Activated CD4-positive, alpha-beta memory T cell treated with anti-CD3 and anti-CD28 coated beads, Interleukin-2, amount 10 ng/mL, durations not matched to agents 7 days and 5 days (primary cell): ENCODE measurements at regions of chr19 and their contacts with region 1.

Region 1: DNA sequence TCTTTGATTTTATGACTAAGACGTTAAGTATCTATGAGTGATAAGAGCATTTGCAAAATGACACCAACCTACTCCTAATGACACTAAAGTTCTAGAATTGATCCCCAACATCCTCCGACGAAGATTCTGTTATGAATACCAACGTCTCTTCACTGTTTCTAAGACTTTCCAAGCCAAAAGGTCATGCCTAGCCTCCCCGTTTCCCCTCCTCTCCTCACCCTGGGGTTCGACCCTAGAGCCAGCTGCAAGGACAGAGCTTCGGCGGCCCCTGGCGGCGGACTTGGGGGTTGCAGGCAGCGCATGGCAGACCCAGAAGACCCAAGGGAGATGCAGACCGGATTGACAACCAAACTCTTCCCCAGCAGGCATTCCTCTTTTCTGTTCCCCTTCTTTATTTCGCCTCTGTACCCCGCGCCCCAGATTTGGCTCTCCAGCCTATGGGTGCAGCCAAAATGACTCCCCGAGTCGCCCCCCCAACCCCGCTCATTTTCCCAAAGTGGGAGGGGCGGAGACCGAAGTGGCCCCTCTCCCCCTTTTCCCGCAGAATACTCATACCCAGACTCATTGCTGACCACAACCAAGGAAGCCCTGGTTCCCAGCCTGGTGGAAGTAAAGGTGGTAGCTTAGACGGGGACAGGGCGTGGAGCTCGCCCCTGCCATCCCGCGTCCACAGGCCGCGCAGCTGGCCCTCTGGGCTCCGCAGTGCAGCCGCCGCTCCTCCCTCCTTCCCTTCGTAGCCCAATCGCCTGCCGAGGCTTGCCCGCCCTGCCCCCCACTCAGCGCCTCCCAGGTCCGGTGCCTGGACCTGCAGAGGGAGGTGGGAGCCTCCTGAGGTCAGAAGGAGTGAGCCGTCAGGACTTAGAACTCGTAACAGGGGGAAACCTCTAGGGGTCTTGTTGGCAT is 4.1 kb upstream of the EML2 start:
- DNase-seq: peak; percentile 90
- H3K4me3 Mint-ChIP-seq: peak overlapping the region; percentile 64
- H3K27ac Mint-ChIP-seq: peak overlapping the region; percentile 100
- H3K4me1 Mint-ChIP-seq: peaks cover 62% of the 10 kb centered on the region
- H3K27me3 Mint-ChIP-seq: no peaks in the 10 kb centered on the region

Region 2: DNA sequence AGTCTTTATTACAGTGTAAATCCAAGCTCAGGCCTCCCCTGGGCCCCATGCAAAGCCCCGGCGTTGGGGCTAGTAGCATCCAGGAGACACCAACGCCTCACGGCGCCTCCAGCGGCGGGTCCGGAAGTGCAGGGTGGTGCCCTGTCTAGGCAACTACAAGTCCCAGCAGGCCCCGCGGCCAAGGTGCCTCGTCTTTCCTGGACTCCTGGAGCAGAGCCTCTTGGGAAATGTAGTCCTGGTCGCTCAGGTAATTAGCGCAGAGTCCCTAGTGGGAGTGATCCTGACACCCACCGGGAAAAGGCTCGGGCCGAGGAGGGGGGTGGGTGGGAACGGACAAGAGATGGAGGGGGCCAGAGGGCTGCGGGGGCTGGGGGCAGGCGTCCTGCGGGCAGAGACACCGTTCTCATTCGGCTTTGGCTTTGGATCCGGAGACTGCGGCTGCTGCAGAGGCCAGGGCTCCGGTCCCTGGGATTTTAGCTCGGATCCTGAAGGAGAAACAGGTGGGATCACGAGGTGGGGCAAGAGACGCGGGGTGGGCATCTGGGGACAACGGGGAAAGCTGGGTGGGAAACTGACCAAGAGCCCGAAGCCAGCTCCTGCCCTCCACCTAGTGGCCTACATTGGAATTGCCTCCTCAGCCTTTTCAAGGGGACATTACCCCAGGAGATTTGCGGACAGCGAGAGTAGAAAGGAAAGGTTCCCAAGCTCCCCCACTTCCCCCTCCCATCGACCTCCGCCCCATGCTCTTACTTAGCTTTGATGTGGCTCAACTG is 157.8 kb before region 1 on chr19:
- CTCF ChIA-PET with region 1: interaction called, 10 read pairs
- POLR2A ChIA-PET with region 1: interaction called, 4 read pairs
- DNase-seq: peak; percentile 99
- H3K4me3 Mint-ChIP-seq: peak overlapping the region; percentile 86
- H3K27ac Mint-ChIP-seq: peak overlapping the region; percentile 78
- H3K4me1 Mint-ChIP-seq: peaks cover 16% of the 10 kb centered on the region
- H3K27me3 Mint-ChIP-seq: peaks cover 7% of the 10 kb centered on the region

Region 3: GRCh38 chr19:45558399-45558878 is 84.8 kb before region 1 on chr19:
- CTCF ChIA-PET with region 1: interaction called, 17 read pairs
- POLR2A ChIA-PET with region 1: interaction called, 3 read pairs
- DNase-seq: peak; percentile 75
- H3K4me3 Mint-ChIP-seq: no peak overlapping the region
- H3K27ac Mint-ChIP-seq: no peak overlapping the region
- H3K4me1 Mint-ChIP-seq: peaks cover 13% of the 10 kb centered on the region
- H3K27me3 Mint-ChIP-seq: no peaks in the 10 kb centered on the region

Region 4: DNA sequence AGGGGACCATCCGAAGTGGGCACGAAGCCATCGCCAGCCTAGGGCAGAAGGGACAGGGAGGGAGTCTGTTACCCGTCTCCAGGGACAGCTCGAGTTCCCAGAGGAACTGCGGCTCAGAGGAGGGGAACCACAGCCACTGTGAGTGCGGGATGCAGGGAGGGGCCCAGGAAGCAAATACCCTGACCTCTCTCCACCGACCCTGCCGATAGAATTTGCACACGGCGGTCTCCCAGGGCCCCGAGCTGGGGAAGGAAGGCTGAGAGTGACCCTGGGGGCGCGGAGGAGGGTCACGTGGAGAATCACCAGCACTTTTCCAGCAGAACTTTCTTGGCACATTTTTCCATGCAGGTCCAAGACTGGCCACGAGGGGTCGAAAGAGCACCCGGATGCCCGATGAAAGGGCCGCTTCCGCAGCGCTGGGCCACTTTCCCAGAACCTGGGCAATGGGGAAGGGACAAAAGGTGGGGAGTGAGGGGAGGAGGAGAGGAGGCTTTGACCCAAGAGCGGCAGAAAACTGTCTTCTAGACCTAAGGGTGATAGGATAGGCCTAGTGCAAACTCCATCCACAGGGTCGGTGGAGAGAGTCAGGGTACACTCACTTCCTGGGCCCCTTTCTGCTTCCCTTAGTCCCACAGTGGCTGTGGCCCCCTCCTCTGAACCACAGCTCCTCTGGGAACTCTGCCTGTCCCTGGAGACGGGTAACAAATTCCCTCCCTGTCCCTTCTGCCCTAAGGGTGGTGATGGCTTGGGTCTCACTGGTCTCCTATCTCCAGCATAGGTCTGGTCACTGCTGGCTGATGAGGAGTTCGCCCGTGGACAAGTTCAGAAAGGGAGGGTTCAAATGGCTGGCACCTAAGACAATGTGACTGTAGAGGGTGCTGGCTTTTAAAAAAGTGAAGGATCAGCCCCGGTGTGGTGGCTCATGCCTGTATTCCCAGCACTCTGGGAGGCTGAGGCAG is 35.9 kb before region 1 on chr19:
- CTCF ChIA-PET with region 1: interaction called, 41 read pairs
- POLR2A ChIA-PET with region 1: interaction called, 85 read pairs
- DNase-seq: peak; percentile 47
- H3K4me3 Mint-ChIP-seq: no peak overlapping the region
- H3K27ac Mint-ChIP-seq: peak overlapping the region; percentile 69
- H3K4me1 Mint-ChIP-seq: peaks cover 18% of the 10 kb centered on the region
- H3K27me3 Mint-ChIP-seq: peaks cover 10% of the 10 kb centered on the region

Region 5: DNA sequence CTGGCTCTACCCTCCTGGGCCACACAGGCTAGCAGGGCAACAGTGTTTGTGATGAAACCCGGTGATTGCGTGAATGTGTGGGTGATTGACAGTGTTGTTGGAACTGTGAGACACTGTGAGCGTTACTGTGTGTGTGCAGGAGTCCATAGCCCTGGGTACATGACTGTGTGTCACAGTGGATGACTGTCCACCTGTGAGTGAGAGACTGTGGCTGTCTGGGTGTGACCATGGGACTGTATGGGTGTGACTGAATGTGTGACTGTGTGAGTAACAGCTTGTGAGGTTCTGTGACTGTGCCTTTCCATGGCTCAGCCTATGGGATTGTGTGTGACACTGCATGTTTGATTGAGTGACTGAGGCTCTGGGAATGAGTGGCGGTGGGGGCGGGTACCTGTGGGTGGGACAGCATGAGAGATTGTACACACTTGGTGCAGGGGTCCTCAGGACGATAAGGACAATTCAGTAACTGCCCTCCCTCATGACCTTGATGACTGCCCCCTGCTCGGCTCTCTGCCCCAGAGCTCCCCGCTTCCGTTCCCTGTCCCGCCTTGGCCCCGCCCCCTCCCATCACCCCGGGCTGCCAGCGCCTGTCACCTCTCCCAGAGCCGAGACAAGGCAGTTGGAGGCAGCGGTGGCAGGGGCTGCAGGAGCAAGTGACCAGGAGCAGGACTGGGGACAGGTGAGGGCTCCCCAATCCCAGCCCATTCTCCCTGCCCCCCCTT is 24.5 kb after region 1 on chr19 and contains the start of gene GIPR:
- CTCF ChIA-PET with region 1: interaction called, 10 read pairs
- POLR2A ChIA-PET with region 1: interaction called, 4 read pairs
- DNase-seq: peak; percentile 75
- H3K4me3 Mint-ChIP-seq: peak within 1 kb of the TSS; percentile 81
- H3K27ac Mint-ChIP-seq: peak within 1 kb of the TSS; percentile 56
- H3K4me1 Mint-ChIP-seq: peaks cover 47% of the 10 kb centered on the region
- H3K27me3 Mint-ChIP-seq: peaks cover 27% of the 10 kb centered on the region
- total RNA-seq, gene GIPR: 11.4 to 12.3 TPM

Region 6: DNA sequence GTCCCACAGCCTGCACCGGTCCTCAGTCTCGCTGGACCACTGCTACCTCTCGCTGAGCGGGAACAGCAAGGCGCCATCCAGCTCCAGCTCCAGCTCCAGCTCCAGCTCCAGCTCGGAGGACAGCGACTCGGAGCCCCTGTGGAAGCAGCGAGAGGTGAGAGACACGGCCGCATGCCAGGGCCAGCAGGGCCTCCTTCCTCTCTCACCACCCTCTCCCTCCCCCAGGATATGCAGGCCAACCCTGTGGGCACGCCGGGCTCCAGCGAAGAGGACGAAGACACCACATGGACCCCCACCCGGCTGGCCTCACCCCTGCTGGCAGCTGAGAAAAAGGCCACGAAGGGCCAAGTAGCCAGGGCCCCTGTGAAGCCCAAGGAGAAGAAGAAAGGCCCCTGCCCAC is 118.4 kb after region 1 on chr19:
- CTCF ChIA-PET with region 1: no interaction called
- POLR2A ChIA-PET with region 1: no interaction called
- DNase-seq: no peak
- H3K4me3 Mint-ChIP-seq: no peak overlapping the region
- H3K27ac Mint-ChIP-seq: no peak overlapping the region
- H3K4me1 Mint-ChIP-seq: no peaks in the 10 kb centered on the region
- H3K27me3 Mint-ChIP-seq: peaks cover 10% of the 10 kb centered on the region

Region 7: GRCh38 chr19:45779231-45780145 is 136.2 kb after region 1 on chr19:
- CTCF ChIA-PET with region 1: no interaction called
- POLR2A ChIA-PET with region 1: no interaction called
- DNase-seq: peak; percentile 95
- H3K4me3 Mint-ChIP-seq: peak overlapping the region; percentile 67
- H3K27ac Mint-ChIP-seq: peak overlapping the region; percentile 33
- H3K4me1 Mint-ChIP-seq: peaks cover 20% of the 10 kb centered on the region
- H3K27me3 Mint-ChIP-seq: peaks cover 8% of the 10 kb centered on the region